GM23248 (cell line): ENCODE measurements at regions of chr4 and their contacts with region 1.

Region 1: DNA sequence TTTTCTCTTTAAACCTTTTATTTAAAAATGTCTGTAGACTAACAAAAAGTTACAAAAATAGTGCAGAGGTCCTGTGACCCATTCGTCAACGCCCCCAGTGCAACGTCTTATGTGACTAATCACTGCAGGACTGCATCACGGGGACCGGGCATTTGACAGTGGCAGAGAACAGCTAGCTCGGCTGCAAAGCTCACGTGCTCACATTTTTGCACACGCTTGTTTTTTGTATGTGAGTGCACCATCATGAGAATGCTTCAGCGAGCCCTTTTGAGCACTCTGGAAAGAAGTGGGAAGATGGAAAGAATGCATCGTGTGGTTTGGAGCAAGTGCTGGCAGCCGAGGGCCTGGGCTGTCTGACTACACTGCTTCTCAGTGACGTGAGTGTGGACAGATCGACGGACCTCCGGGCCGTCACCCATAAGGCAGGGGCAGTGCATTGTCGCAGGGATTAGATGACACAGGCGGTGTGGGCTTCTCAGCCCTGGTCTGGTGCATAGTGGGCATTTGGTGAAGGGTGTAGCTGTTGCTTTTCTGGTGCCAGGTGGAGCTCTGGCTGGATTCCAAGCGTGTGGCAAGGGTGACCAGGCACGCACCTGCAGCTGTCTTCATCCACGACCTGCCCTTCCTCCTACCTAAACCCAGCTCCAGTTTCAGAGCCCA is 17.7 kb downstream of the SPON2 start:
- DNase-seq: peak; percentile 89
- H3K4me3 ChIP-seq: peak overlapping the region; percentile 24; the same call in 1 of the 2 replicates
- H3K27ac ChIP-seq: no peak overlapping the region
- H3K4me1 ChIP-seq: peaks cover 6% of the 10 kb centered on the region; the same call in 1 of the 2 replicates
- H3K27me3 ChIP-seq: no peaks in the 10 kb centered on the region

Region 2: DNA sequence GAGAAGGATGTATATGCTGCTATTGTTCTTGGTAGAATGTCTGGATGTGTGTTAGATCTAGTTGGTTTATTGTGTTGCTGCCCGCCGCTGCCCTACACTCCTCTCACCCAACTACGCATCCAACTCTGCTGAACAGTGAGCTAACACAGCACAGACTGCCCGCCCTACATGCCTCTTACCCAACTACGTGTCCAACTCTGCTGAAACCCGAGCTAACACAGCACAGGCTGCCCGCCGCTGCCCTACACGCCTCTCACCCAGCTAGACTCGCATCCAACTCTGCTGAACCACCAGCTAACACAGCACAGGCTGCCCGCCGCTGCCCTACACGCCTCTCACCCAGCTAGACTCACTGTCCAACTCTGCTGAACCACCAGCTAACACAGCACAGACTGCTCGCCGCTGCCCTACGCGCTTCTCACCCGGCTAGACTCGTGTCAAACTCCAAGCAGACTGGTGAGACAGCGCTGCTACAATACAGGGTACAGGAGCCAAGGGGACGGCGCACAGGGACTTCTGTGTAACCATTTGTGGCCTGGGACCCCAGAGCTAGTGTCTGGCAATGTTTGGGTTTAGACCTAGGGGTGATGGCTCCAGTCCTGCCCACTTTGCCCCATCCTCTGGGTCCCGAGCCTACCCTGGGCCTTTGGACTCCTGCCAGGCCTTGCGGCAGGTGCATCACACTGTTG is 105.9 kb after region 1 on chr4:
- in situ Hi-C with region 1: loop called (anchors 5 kb)
- DNase-seq: no peak
- H3K4me3 ChIP-seq: no peak overlapping the region
- H3K27ac ChIP-seq: no peak overlapping the region
- H3K4me1 ChIP-seq: no peaks in the 10 kb centered on the region
- H3K27me3 ChIP-seq: no peaks in the 10 kb centered on the region

Region 3: GRCh38 chr4:1547856-1548826 is 393.5 kb after region 1 on chr4:
- in situ Hi-C with region 1: no loop called
- DNase-seq: no peak
- H3K4me3 ChIP-seq: no peak overlapping the region; the same call in 1 of the 2 replicates
- H3K27ac ChIP-seq: no peak overlapping the region
- H3K4me1 ChIP-seq: no peaks in the 10 kb centered on the region
- H3K27me3 ChIP-seq: no peaks in the 10 kb centered on the region; the same call in 1 of the 2 replicates

Region 4: GRCh38 chr4:2241410-2242353 is 1087.0 kb after region 1 on chr4 and contains the starts of genes HAUS3 and POLN:
- in situ Hi-C with region 1: no loop called
- DNase-seq: peak; percentile 99
- H3K4me3 ChIP-seq: peak within 1 kb of the TSS; percentile 83
- H3K27ac ChIP-seq: peak within 1 kb of the TSS; percentile 22
- H3K4me1 ChIP-seq: peaks cover 29% of the 10 kb centered on the region
- H3K27me3 ChIP-seq: no peaks in the 10 kb centered on the region
- total RNA-seq, gene HAUS3: 10.2 and 14.9 TPM in 2 replicates
- total RNA-seq, gene POLN: 1.8 and 3.9 TPM in 2 replicates